ENCODE measurements at regions of chr17 and their contacts with region 1.

Region 1: DNA sequence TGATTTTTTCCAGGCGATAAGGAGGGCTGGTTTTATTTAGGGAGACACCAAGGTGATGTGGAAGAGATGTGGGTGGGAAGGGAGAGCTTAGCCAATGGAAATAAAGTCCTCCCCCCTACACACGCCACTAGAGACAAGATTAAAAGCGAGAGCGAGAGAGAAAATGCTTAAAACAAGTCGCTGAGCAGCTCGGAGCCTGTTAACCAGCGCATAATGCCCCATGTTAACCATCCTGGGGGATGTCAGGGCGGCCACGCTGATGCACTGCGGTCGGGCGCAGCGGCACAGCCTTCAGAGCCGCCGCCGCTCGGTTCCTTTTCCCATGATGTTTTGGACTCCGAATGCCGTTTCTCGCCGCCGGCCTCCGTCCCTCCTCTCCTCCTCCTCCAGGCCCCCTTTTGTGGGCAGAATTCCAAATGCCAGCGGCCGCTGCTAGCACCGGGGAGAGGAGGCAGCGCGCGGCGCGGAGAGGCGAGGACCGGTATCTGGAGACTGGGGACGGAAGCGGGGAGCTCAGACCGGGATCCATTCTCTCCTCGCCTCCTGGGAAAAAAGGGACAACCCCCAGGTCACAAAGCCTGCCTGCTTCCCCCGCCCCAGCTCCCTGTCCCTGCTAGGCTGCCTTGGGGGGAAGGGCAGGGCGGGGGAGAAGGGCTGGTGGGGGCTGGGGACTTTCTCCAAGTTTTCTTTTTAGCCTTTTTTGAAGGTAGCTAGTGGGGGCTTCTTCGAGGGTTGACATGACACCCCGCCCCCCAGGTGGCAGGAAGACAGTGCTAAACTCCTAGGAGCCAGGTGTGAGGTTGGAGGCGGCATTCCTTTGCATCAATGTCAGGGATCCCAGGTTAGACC is 98.1 kb upstream of the CCL2 start:
- DNase-seq: no peak
- H3K4me3 Mint-ChIP-seq: no peak overlapping the region
- H3K27ac Mint-ChIP-seq: no peak overlapping the region
- H3K4me1 Mint-ChIP-seq: no peaks in the 10 kb centered on the region
- H3K27me3 Mint-ChIP-seq: peaks cover 83% of the 10 kb centered on the region
- CTCF ChIP-seq: no peak

Region 2: GRCh38 chr17:34006126-34006525 is 150.8 kb before region 1 on chr17:
- CTCF ChIA-PET with region 1: no interaction called
- intact Hi-C with region 1: no loop called
- DNase-seq: no peak
- H3K4me3 Mint-ChIP-seq: no peak overlapping the region
- H3K27ac Mint-ChIP-seq: no peak overlapping the region
- H3K4me1 Mint-ChIP-seq: no peaks in the 10 kb centered on the region
- H3K27me3 Mint-ChIP-seq: no peaks in the 10 kb centered on the region
- CTCF ChIP-seq: no peak

Region 3: GRCh38 chr17:34961093-34961911 is 804.3 kb after region 1 on chr17 and contains the starts of genes CCT6B and ZNF830:
- CTCF ChIA-PET with region 1: interaction called, 11 read pairs
- intact Hi-C with region 1: no loop called
- DNase-seq: peak; percentile 85
- H3K4me3 Mint-ChIP-seq: peak within 1 kb of the TSS; percentile 93
- H3K27ac Mint-ChIP-seq: peak within 1 kb of the TSS; percentile 100
- H3K4me1 Mint-ChIP-seq: peaks cover 16% of the 10 kb centered on the region
- H3K27me3 Mint-ChIP-seq: peaks cover 10% of the 10 kb centered on the region
- CTCF ChIP-seq: no peak
- total RNA-seq, gene CCT6B: 0.52 and 2.2 TPM in 2 replicates
- total RNA-seq, gene ZNF830: 14.6 and 18.9 TPM in 2 replicates